AG04449 (cell line): ENCODE measurements at regions of chr15 and their contacts with region 1.

Region 1: GRCh38 chr15:74307827-74308644 is 59.4 kb downstream of the CYP11A1 start:
- DNase-seq: no peak
- H3K4me3 ChIP-seq: no peak overlapping the region
- CTCF ChIP-seq: peak; percentile 88

Region 2: GRCh38 chr15:74127260-74127953 is 180.6 kb before region 1 on chr15:
- CTCF ChIA-PET with region 1: interaction called, 219 read pairs
- POLR2A ChIA-PET with region 1: no interaction called
- DNase-seq: peak; percentile 5
- H3K4me3 ChIP-seq: peak overlapping the region; percentile 51
- CTCF ChIP-seq: peak; percentile 100

Region 3: DNA sequence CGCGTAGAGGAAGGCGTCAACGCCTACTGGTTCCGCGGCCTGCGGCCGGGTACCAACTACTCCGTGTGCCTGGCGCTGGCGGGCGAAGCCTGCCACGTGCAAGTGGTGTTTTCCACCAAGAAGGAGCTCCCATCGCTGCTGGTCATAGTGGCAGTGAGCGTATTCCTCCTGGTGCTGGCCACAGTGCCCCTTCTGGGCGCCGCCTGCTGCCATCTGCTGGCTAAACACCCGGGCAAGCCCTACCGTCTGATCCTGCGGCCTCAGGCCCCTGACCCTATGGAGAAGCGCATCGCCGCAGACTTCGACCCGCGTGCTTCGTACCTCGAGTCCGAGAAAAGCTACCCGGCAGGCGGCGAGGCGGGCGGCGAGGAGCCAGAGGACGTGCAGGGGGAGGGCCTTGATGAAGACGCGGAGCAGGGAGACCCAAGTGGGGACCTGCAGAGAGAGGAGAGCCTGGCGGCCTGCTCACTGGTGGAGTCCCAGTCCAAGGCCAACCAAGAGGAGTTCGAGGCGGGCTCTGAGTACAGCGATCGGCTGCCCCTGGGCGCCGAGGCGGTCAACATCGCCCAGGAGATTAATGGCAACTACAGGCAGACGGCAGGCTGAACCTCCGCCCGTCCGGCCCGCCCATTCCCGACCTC is 173.5 kb before region 1 on chr15:
- CTCF ChIA-PET with region 1: interaction called, 219 read pairs
- POLR2A ChIA-PET with region 1: no interaction called
- DNase-seq: no peak
- H3K4me3 ChIP-seq: no peak overlapping the region
- CTCF ChIP-seq: peak; percentile 68

Region 4: DNA sequence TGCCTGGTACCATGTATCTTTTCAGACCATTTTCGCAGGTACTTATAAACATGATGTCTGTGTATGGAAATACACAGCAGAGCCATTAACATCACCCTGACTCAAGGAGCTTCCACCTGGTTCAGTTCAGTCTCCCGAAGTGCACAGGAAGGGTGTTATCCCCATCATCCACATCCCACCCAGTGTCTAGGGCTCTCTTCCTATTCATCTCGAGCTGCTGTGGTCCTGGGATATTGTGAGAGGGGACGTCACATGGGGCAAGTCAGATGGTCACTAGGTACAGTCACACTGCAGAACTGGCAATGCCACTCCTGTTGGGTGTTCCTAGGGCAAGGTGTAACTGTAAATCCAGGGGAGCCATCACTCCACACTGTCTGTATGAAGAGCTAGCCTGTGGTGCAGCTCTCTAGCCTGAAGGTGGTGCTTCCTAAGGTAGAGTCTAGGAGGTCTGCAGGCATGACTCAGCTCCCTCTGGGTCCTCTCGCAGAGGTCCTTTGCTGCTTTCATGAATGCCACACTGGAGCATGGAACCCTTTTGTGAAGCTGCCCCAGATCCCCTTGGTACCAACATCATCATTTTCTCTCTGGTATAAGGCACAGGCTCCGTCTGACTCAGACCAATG is 163.8 kb before region 1 on chr15:
- CTCF ChIA-PET with region 1: interaction called, 14 read pairs
- POLR2A ChIA-PET with region 1: no interaction called
- DNase-seq: no peak
- H3K4me3 ChIP-seq: no peak overlapping the region
- CTCF ChIP-seq: no peak

Region 5: GRCh38 chr15:74250266-74250665 is 57.8 kb before region 1 on chr15:
- CTCF ChIA-PET with region 1: interaction called, 10 read pairs
- POLR2A ChIA-PET with region 1: no interaction called
- DNase-seq: no peak
- H3K4me3 ChIP-seq: no peak overlapping the region
- CTCF ChIP-seq: no peak

Region 6: DNA sequence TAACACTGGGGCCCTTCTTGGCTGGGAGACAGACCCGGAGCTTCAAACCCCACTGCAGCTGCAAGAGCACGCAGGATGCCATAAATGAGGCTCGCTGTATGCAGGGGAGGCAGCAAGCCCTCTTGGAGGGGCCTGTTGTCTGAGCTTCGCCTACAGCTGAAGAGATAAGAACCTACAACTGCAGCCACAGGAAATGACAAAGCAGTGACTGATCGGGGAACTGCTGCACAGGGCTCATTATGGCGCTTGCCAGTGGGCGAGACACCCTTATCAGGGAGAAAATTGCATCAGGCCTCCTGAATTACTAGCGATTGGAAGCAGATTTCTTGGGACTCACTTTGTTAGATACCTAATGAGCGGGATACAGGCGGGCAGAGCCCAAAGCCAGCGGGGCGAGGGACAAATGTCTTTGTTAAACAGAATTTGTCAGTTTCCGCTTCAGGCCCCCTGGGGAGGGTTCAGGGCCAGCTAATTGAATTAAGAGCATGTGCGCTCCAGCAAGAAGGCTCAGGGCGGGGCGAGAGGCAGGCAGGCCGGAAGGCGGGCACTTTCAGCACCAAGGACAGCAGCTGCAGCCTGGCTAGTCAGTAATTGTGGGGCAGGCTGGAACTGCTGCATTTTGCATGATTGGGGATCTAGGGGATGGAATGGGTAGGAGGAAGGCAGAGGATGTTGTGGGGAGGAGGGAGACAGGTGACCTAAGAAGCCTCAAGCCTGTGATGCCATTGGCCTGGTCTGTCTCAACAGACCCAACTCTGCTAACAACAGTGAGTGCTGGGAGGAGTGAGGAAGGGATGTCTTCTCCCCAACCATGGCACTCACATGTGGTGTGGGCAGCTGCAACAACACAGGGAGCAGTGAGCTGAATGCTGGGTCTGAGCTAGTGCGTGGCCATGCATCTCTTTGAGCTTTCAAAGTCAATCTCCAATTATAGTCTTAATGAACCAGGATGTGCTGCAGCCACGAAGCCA is 16.6 kb before region 1 on chr15:
- CTCF ChIA-PET with region 1: interaction called, 14 read pairs
- POLR2A ChIA-PET with region 1: no interaction called
- DNase-seq: peak; percentile 4
- H3K4me3 ChIP-seq: no peak overlapping the region
- CTCF ChIP-seq: no peak

Region 7: DNA sequence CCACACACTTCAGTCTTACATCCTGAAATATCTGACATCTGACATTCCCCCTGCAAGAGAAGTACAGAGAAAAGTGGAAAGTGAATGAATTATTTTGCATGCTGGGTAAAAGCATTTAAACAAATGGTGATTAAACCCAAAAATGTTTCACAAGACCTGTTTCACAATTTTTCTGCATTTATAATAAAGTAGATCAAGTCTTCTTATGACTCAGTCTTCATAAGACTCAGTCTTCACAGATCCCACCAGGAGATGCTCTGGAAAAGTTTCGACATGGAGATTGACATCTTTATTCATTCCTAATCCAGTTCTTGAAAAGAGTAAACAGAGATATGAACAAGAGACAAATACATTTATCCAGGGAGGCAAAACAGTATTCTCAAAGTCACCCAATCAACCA is 401.0 kb after region 1 on chr15:
- CTCF ChIA-PET with region 1: no interaction called
- POLR2A ChIA-PET with region 1: no interaction called
- DNase-seq: no peak
- H3K4me3 ChIP-seq: no peak overlapping the region
- CTCF ChIP-seq: no peak